ENCODE measurements at regions of chr14 and their contacts with region 1.

Region 1: DNA sequence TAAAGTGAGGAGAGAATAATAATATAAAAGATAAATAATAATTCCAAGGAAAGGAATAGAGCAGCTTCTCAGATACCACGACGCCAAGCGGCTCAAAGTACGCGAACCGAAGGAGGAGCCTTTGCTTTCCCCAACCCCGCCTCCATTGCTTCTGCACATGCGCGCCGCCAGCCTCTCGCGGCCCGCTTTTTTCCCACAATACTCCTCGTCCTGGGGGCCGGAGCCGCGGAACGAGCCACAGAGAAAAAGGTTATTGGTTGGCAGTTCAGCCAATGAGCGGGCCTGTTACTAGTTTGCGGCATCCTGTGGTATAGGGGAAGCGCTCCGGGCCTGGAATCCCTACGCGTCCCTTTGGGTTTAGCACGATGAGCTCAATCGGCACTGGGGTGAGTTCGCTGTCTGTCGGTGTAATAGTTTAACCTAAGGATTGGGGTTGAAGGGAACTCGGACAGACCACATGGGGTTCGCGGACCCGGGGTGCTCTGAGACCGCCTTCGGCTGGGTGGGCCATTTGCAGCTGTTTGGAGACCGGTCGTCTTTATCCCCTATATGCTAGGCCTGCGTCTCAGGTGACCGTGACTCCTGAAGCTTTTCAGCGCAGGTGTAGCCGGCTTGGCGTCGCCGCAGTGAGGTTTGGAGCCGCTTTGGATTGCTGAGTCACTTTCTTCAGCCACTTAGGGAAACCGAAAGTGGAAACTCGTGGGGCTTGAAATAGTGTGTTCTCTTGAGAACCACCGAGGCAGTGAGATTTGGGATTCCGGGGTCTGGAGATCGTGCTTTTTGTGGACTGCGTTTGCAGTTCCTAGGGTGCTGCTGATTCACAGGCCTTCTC is at the start of gene PSMA3:
- DNase-seq: peak; percentile 98
- H3K4me3 Mint-ChIP-seq: peak within 1 kb of the TSS; percentile 96
- H3K27ac Mint-ChIP-seq: peak within 1 kb of the TSS; percentile 99
- H3K4me1 Mint-ChIP-seq: peaks cover 20% of the 10 kb centered on the region
- H3K27me3 Mint-ChIP-seq: no peaks in the 10 kb centered on the region
- CTCF ChIP-seq: no peak
- total RNA-seq, gene PSMA3: 203 and 239 TPM in 2 replicates

Region 2: DNA sequence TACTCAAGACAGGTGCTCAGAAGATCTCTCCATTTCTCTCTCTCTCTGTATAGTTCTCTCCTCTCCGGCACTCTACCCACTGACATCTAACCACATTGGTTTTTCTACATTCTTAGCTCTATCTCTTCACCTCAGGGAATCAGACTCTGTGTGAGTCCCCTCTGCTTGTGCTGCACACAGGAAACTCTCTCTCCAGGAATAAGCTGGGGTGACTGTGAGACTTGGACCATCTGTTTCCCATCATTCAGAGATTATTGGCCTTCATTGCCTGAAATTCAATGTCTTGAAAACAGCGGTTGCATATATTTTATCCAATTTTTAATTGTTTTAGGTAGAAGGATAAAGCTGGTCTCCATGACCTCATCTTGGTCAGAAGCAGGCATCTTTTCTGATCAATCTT is 483.9 kb before region 1 on chr14:
- CTCF ChIA-PET with region 1: no interaction called
- POLR2A ChIA-PET with region 1: no interaction called
- intact Hi-C with region 1: no loop called
- DNase-seq: no peak
- H3K4me3 Mint-ChIP-seq: no peak overlapping the region
- H3K27ac Mint-ChIP-seq: no peak overlapping the region
- H3K4me1 Mint-ChIP-seq: peaks cover 6% of the 10 kb centered on the region
- H3K27me3 Mint-ChIP-seq: no peaks in the 10 kb centered on the region
- CTCF ChIP-seq: no peak

Region 3: DNA sequence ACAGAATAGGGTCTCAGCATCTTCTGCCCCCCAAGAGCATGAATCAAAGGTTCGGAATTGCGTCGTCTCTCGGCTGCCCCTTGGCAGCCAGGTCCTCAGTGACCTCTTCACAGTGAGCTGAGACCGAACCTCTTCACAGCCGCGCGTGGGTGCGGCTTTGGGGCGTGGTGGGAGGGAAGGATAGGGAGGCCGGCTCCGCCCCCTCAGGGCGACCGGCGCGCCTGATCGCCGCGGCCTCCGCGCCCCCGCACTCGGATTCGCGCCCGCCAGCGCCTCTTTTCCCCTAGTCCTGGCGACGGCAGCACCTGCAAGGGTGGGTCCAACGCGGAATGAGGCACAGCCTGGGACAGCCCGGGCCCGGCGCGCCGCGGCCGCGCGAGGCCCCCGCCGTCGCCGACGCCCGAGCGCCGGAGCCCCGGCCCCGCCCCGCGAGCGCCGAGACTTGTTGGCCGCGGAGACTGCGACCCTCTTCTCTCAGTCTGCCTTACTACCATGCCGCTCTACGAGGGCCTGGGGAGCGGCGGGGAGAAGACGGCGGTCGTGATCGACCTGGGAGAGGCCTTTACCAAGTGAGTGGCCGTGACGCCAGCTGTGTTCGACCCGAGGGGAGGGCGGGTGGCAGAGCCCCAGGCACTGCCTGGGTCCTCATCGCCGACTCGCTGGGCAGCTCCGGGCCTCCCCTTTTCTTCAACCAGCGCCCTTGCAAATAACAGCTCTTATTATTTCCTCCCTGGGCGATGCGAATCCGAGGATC is 44.9 kb before region 1 on chr14 and contains the start of gene ACTR10:
- CTCF ChIA-PET with region 1: no interaction called
- POLR2A ChIA-PET with region 1: interaction called, 19 read pairs
- intact Hi-C with region 1: no loop called
- DNase-seq: peak; percentile 88
- H3K4me3 Mint-ChIP-seq: peak within 1 kb of the TSS; percentile 98
- H3K27ac Mint-ChIP-seq: peak within 1 kb of the TSS; percentile 85
- H3K4me1 Mint-ChIP-seq: peaks cover 16% of the 10 kb centered on the region
- H3K27me3 Mint-ChIP-seq: peaks cover 20% of the 10 kb centered on the region
- CTCF ChIP-seq: no peak
- total RNA-seq, gene ACTR10: 55.1 and 78.8 TPM in 2 replicates

Region 4: DNA sequence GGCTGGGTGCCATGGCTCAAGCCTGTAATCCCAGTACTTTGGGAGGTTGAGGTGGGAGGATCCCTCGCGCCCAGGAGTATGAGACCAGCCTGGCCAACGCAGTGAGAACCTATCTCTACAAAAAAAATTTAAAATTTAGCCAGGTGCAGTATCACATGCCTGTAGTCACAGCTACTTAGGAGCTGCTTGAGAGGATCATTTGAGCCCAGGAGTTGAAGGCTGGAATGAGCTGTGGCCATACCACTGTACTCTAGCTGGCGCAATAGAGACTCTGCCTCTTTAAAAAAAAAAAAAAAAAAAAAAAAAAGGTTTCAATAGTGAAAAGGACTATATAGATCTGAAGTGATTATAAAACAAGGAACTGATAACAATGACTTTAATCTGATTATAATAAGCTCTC is 13.4 kb after region 1 on chr14:
- CTCF ChIA-PET with region 1: interaction called, 4 read pairs
- POLR2A ChIA-PET with region 1: interaction called, 52 read pairs
- intact Hi-C with region 1: no loop called
- DNase-seq: no peak
- H3K4me3 Mint-ChIP-seq: no peak overlapping the region
- H3K27ac Mint-ChIP-seq: no peak overlapping the region
- H3K4me1 Mint-ChIP-seq: no peaks in the 10 kb centered on the region
- H3K27me3 Mint-ChIP-seq: no peaks in the 10 kb centered on the region
- CTCF ChIP-seq: no peak

Region 5: GRCh38 chr14:58265401-58265800 is 20.6 kb after region 1 on chr14:
- CTCF ChIA-PET with region 1: no interaction called
- POLR2A ChIA-PET with region 1: interaction called, 52 read pairs
- intact Hi-C with region 1: no loop called
- DNase-seq: no peak
- H3K4me3 Mint-ChIP-seq: no peak overlapping the region
- H3K27ac Mint-ChIP-seq: peak overlapping the region; percentile 63
- H3K4me1 Mint-ChIP-seq: peaks cover 4% of the 10 kb centered on the region
- H3K27me3 Mint-ChIP-seq: no peaks in the 10 kb centered on the region
- CTCF ChIP-seq: no peak

Region 6: GRCh38 chr14:58280954-58281787 is 36.4 kb after region 1 on chr14:
- CTCF ChIA-PET with region 1: no interaction called
- POLR2A ChIA-PET with region 1: interaction called, 16 read pairs
- intact Hi-C with region 1: no loop called
- DNase-seq: peak; percentile 67
- H3K4me3 Mint-ChIP-seq: peak overlapping the region; percentile 43
- H3K27ac Mint-ChIP-seq: peak overlapping the region; percentile 97
- H3K4me1 Mint-ChIP-seq: peaks cover 42% of the 10 kb centered on the region
- H3K27me3 Mint-ChIP-seq: no peaks in the 10 kb centered on the region
- CTCF ChIP-seq: no peak

Region 7: GRCh38 chr14:58427281-58428117 is 182.7 kb after region 1 on chr14 and contains the starts of genes KIAA0586 and TIMM9:
- CTCF ChIA-PET with region 1: no interaction called
- POLR2A ChIA-PET with region 1: interaction called, 23 read pairs
- intact Hi-C with region 1: no loop called
- DNase-seq: peak; percentile 99
- H3K4me3 Mint-ChIP-seq: peak within 1 kb of the TSS; percentile 85
- H3K27ac Mint-ChIP-seq: peak within 1 kb of the TSS; percentile 96
- H3K4me1 Mint-ChIP-seq: peaks cover 22% of the 10 kb centered on the region
- H3K27me3 Mint-ChIP-seq: no peaks in the 10 kb centered on the region
- CTCF ChIP-seq: no peak
- total RNA-seq, gene KIAA0586: 19.6 and 26.2 TPM in 2 replicates
- total RNA-seq, gene TIMM9: 52.8 and 102 TPM in 2 replicates